H1 (cell line): ENCODE measurements at regions of chr12 and their contacts with region 1.

Region 1: DNA sequence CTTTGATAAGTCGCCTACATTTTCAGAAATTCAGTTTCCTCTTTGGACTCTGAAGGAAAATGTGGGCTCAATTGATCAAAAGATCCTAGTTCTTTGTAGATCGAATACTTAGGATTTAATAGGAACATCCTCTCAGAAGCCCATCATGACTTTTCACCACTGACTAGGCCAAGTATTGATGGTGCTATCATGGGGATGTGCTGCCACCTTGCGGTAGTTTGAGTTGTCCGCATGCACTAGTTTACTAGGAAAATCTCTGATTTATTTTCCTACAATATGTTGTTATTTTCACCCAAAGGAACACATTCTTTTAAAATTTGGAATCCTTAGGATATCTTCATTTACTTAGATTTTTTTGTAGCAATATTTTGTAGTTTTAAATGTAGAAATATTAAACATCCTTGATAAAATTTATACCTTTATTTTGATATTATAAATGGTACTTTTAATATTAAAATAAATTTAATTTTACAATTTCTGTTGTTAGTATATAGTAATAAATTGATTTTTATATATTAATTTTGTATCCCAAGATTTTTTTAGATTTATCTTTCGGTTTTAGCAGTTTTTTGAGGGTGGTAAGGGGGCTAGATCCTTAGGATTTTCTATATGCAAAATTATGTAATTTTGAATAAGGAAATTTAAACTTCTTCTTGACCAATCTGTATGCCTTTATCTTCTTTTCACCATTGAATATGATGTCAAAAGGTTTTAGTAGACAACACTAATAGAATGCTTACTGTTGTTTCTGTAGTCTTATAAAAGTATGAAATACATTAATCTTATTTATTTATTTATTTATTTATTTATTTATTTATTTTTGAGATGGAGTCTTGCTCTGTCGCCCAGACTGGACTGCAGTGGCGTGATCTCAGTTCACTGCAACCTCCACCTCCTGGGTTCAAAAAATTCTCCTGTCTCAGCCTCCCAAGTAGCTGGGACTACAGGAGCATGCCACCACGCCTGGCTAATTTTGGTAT is 52.9 kb upstream of the OR9K2 start:
- DNase-seq: peak in 1 of 2 experiments; percentile 81
- H3K4me3 ChIP-seq: no peak overlapping the region
- H3K27ac ChIP-seq: no peak overlapping the region
- H3K4me1 ChIP-seq: no peaks in the 10 kb centered on the region
- H3K27me3 ChIP-seq: no peaks in the 10 kb centered on the region
- CTCF ChIP-seq: peak; percentile 34 to 86 (median 74)
- EP300 ChIP-seq: no peak
- POLR2A ChIP-seq: no peak
- RAD21 ChIP-seq: peak; percentile 96

Region 2: GRCh38 chr12:54701940-54702592 is 371.3 kb before region 1 on chr12:
- CTCF ChIA-PET with region 1: interaction called, 18 read pairs
- POLR2A ChIA-PET with region 1: no interaction called
- DNase-seq: no peak
- H3K4me3 ChIP-seq: no peak overlapping the region
- H3K27ac ChIP-seq: no peak overlapping the region
- H3K4me1 ChIP-seq: no peaks in the 10 kb centered on the region
- H3K27me3 ChIP-seq: no peaks in the 10 kb centered on the region
- CTCF ChIP-seq: peak in 2 of 3 experiments; percentile 43 to 55; a peak in 2 of 4 replicates
- EP300 ChIP-seq: no peak
- POLR2A ChIP-seq: no peak
- RAD21 ChIP-seq: peak; percentile 79

Region 3: DNA sequence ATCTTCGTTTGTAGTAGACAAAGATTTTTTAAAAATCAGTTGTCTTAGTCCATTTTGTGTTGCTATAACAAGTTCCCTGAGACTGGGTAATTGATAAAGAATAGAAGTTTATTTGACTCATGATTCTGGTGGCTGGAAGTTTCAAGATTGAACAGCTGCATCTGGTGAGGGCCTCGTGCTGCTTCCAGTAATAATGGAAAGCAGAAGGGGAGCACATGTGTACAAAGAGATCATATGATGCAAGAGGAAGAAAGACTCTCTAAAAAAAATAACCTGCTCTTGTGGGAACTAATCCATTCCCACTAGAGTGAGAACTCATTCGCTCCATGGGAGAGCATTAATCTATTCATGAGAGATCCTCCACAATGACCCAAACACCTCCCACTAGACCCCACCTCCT is 194.2 kb before region 1 on chr12:
- CTCF ChIA-PET with region 1: no interaction called
- POLR2A ChIA-PET with region 1: no interaction called
- DNase-seq: no peak
- H3K4me3 ChIP-seq: no peak overlapping the region
- H3K27ac ChIP-seq: no peak overlapping the region
- H3K4me1 ChIP-seq: no peaks in the 10 kb centered on the region
- H3K27me3 ChIP-seq: no peaks in the 10 kb centered on the region
- CTCF ChIP-seq: no peak
- EP300 ChIP-seq: no peak
- POLR2A ChIP-seq: no peak
- RAD21 ChIP-seq: no peak

Region 4: GRCh38 chr12:54958048-54958658 is 115.2 kb before region 1 on chr12:
- CTCF ChIA-PET with region 1: interaction called, 13 read pairs
- POLR2A ChIA-PET with region 1: no interaction called
- DNase-seq: no peak
- H3K4me3 ChIP-seq: no peak overlapping the region
- H3K27ac ChIP-seq: no peak overlapping the region
- H3K4me1 ChIP-seq: peaks cover 0 to 5% (median 0%) of the 10 kb centered on the region in 4 experiments; a peak in 2 of 7 replicates
- H3K27me3 ChIP-seq: no peaks in the 10 kb centered on the region
- CTCF ChIP-seq: peak in 2 of 3 experiments; percentile 61 to 70; a peak in 2 of 4 replicates
- EP300 ChIP-seq: no peak
- POLR2A ChIP-seq: no peak
- RAD21 ChIP-seq: peak; percentile 94 to 97

Region 5: DNA sequence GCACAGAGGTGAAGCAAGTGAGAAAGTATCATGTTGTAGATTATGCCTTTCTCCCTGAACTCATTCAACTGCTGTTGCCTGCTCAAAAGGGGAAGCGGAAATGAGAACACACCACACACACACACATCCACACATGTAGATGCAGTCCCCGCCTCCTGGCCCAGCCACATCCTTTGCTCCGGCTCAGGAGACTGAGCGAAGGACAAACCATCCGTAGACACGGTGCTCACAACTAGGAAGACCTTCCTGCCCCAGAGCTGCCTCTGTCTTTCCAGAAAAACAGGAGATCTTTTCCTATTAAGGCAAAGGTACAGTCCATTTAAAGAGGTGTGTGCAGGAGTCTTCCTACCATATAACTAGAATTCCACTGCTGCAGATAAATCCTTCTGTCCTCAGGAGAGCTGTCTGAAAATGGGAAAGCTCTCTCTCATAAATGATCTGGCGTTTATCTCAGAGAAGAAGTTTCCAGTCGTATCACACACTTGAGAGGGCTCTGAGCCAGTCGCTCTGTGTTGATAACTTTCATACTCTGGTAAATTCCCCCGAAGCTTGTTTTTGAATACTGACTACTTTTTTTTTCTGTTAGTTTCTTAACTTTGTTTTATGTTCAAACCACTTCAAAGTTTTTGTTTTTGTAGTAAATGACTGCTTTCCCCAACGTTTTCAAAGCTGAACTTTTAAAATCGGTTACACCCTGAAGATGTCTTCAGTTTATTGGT is 88.5 kb before region 1 on chr12 and contains the start of gene TESPA1:
- CTCF ChIA-PET with region 1: interaction called, 40 read pairs
- POLR2A ChIA-PET with region 1: no interaction called
- DNase-seq: no peak
- H3K4me3 ChIP-seq: no peak within 1 kb of the TSS
- H3K27ac ChIP-seq: no peak within 1 kb of the TSS
- H3K4me1 ChIP-seq: no peaks in the 10 kb centered on the region
- H3K27me3 ChIP-seq: no peaks in the 10 kb centered on the region
- CTCF ChIP-seq: no peak
- EP300 ChIP-seq: no peak
- POLR2A ChIP-seq: no peak
- RAD21 ChIP-seq: no peak
- total RNA-seq, gene TESPA1: not detected in 2 replicates

Region 6: GRCh38 chr12:55019779-55020178 is 53.6 kb before region 1 on chr12 and contains the start of gene NEUROD4:
- CTCF ChIA-PET with region 1: interaction called, 10 read pairs
- POLR2A ChIA-PET with region 1: no interaction called
- DNase-seq: peak; percentile 80 to 83
- H3K4me3 ChIP-seq: peak within 1 kb of the TSS; percentile 22 to 49 (median 27); a peak in 6 of 8 replicates
- H3K27ac ChIP-seq: no peak within 1 kb of the TSS
- H3K4me1 ChIP-seq: peaks cover 0 to 2% (median 0%) of the 10 kb centered on the region in 4 experiments; a peak in 2 of 7 replicates
- H3K27me3 ChIP-seq: no peaks in the 10 kb centered on the region
- CTCF ChIP-seq: no peak
- EP300 ChIP-seq: 0 out of 3 replicates have a peak, but pooled peaks of 1 of the 2 experiments have one; percentile 6
- POLR2A ChIP-seq: 0 out of 3 replicates have a peak, but pooled peaks of 1 of the 2 experiments have one; percentile 24
- RAD21 ChIP-seq: peak in 1 of 2 experiments; percentile 21; a peak in 1 of 4 replicates
- total RNA-seq, gene NEUROD4: not detected in 2 replicates

Region 7: DNA sequence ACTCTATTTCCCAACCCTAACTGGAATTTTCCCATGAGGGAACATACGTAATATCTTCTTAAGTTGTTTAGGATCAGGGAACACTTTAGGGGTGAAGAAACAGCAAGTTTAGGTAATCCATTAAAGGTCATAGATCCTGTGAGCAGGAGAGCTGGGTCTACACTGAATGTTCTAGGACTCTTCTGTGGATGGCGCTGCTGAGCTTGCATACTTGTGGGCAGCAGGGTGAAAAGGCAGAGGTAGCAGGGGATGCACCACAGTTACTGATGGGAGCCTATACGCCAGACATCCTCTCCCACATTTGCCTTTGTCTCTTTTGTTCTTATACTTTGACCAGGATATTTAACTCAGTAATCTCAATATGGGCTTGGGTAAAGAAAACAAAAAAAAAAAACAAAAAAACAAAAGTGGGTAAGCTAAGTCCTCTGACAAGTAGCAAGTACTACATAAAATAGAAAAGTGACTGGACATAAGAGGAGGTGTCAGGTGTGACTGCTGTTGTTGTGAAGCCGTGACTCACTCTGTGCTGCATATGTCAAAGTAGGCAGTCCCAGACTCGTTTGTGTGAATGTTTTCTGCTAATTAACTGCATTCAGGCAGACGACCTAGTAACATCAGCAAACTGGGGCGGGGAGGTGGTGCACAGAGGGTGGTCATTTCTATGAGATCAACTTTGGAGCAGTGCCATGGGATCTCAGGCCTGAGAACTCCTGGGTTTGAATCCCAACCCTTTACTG is 22.0 kb before region 1 on chr12:
- CTCF ChIA-PET with region 1: interaction called, 29 read pairs
- POLR2A ChIA-PET with region 1: no interaction called
- DNase-seq: no peak
- H3K4me3 ChIP-seq: no peak overlapping the region
- H3K27ac ChIP-seq: no peak overlapping the region
- H3K4me1 ChIP-seq: no peaks in the 10 kb centered on the region
- H3K27me3 ChIP-seq: no peaks in the 10 kb centered on the region
- CTCF ChIP-seq: peak; percentile 36 to 56 (median 40)
- EP300 ChIP-seq: no peak
- POLR2A ChIP-seq: no peak
- RAD21 ChIP-seq: peak; percentile 23 to 56; a peak in 3 of 4 replicates

Region 8: GRCh38 chr12:55789171-55789570 is 715.8 kb after region 1 on chr12:
- CTCF ChIA-PET with region 1: no interaction called
- POLR2A ChIA-PET with region 1: no interaction called
- DNase-seq: no peak
- H3K4me3 ChIP-seq: no peak overlapping the region
- H3K27ac ChIP-seq: no peak overlapping the region
- H3K4me1 ChIP-seq: no peaks in the 10 kb centered on the region
- H3K27me3 ChIP-seq: no peaks in the 10 kb centered on the region
- CTCF ChIP-seq: no peak
- EP300 ChIP-seq: no peak
- POLR2A ChIP-seq: no peak
- RAD21 ChIP-seq: no peak